Stomach (tissue), 19 donors: ENCODE measurements at regions of chr13 and their contacts with region 1.

Region 1: DNA sequence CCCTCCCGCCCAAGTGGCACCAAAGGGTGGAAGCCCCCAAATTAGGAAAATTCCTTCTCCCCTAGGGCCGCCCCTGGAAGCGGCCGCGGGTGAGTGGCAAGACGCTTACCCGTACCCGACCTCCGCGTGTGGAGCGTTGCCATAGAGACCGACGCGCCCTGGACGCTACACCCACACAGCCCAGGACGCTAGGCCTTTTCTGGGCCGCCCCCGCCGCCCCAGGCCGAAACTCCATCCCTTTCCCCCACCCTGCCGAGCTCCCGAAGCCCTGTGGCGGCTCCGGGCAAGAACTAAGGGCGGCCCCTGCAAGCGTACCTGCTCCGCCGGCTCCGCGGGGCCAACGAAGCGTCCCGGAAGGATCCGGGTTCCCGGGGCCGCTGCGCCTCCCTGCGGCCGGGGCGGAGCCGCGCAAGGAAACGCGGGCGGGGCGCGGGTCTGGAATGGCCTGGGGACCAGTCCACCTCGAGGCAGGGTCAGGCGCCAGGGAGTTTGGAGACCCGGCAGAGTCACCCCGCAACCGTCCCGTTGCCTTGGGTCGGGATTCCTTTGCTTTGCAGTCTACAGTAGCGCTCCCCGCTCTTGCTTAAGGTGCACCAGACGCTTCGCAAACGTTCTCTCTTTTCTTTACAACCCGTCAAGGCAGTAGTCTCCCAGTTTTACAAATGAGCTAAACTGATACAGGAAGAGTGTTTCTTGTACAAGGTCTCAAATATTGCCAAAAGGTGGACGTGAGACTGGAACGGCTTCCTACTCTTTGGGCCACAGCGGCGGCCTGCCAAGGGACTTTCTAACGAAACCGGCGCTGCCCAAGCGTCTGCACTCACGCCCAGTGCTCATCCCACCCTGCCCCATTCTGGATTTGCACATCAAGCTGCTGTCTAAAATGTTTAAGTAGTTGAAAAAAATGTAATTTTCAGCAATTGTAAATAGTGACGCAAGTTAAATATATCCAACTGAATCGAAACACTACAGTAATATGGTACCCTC is at the start of gene NEK5:
- DNase-seq: peak; percentile 72 to 89
- H3K4me3 ChIP-seq: peak within 1 kb of the TSS; percentile 62 to 78 (median 64)
- H3K27ac ChIP-seq: peak within 1 kb of the TSS in 3 of 5 donors; percentile 44 to 51 (median 48)
- H3K4me1 ChIP-seq: peaks cover 6 to 26% (median 21%) of the 10 kb centered on the region in 4 donors
- H3K27me3 ChIP-seq: no peaks in the 10 kb centered on the region
- CTCF ChIP-seq: peak in 5 of 7 experiments; percentile 65 to 76 (median 71)
- EP300 ChIP-seq: no peak
- POLR2A ChIP-seq: no peak
- total RNA-seq, gene NEK5: 0.73 to 4.0 TPM in 2 of 5 donors, not detected in the others

Region 2: DNA sequence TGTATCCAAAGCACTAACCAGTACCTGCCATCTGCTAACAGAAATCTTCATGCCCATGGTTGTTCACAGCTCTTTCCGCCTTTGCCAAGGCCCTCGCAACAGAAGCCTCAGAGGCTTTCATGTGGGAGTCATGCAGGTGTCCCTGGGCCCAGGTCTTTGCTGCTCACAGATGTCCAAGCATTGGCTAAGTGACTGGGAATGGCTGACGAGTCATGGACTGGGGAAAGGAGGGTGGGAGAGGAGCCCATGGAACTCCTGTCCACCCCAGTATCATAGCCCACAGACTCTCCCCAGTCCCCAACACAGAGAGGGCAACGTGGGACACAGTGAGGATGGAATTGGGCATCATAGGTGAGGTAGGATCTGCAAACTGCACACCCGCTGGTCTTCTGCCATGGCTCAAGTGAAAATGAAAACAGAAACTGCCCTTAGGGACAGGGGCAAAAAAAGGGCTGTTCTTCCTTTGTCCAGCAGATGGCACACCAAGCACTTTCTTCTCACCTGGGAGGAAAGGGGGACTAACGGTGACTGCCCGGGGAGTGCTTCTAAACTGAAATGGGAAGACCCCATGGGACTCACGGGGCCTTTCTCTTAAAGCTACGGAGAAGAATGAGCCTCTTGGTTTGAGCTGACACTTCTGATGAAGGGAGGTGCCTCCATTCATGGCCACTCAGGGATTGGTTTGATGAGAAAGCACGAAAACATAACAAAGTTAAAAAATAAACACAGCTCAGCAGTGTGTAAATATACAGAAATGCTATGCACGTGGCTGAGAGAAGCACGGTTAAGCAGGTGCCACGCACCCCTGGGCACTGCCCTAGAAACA is 314.0 kb before region 1 on chr13:
- intact Hi-C with region 1: loop called (anchors 10 kb)
- DNase-seq: peak; percentile 78 to 88
- H3K4me3 ChIP-seq: peak overlapping the region; percentile 14 to 29 (median 24)
- H3K27ac ChIP-seq: peak overlapping the region in 1 of 5 donors; percentile 23
- H3K4me1 ChIP-seq: peaks cover 7 to 27% (median 23%) of the 10 kb centered on the region in 4 donors
- H3K27me3 ChIP-seq: no peaks in the 10 kb centered on the region
- CTCF ChIP-seq: peak in 5 of 7 experiments; percentile 71 to 85 (median 80)
- EP300 ChIP-seq: no peak
- POLR2A ChIP-seq: no peak

Region 3: GRCh38 chr13:51895906-51896888 is 232.8 kb before region 1 on chr13:
- intact Hi-C with region 1: loop called (anchors 10 kb)
- DNase-seq: peak; percentile 67 to 80
- H3K4me3 ChIP-seq: no peak overlapping the region
- H3K27ac ChIP-seq: no peak overlapping the region
- H3K4me1 ChIP-seq: no peaks in the 10 kb centered on the region
- H3K27me3 ChIP-seq: no peaks in the 10 kb centered on the region
- CTCF ChIP-seq: peak in 5 of 7 experiments; percentile 45 to 63 (median 54)
- EP300 ChIP-seq: no peak
- POLR2A ChIP-seq: no peak

Region 4: GRCh38 chr13:51935326-51936201 is 193.4 kb before region 1 on chr13:
- intact Hi-C with region 1: loop called (anchors 10 kb)
- DNase-seq: peak; percentile 59 to 67
- H3K4me3 ChIP-seq: no peak overlapping the region
- H3K27ac ChIP-seq: no peak overlapping the region
- H3K4me1 ChIP-seq: peaks cover 0 to 8% (median 4%) of the 10 kb centered on the region in 4 donors
- H3K27me3 ChIP-seq: no peaks in the 10 kb centered on the region
- CTCF ChIP-seq: peak in 5 of 7 experiments; percentile 38 to 64 (median 53)
- EP300 ChIP-seq: no peak
- POLR2A ChIP-seq: no peak

Region 5: DNA sequence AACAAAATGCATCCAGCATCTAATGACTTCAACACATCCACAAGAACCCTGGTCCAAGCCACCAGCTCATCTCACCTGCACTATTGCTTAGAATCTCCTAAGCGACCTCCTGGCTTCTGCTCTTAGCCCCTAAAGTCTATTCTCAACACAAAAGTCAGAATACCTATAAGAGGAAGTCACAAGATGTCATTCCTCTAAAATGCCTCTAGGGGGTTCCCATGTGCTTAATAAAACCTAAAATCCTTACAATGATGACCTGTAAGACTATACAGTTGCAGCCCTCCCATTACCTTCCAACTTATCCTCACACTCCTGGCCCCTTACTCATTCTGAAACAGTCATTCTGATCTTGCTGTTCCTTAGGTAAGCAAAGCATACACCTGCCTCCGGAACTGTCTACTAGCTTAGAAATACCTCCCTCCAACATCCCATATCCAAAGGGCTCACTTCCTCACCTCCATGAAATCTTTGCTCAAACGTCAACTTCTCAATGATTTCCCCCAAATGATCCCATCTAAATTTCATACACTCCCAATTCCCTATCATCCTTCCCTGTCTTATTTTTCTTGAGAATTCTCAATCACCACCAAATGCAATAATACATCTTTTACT is 127.8 kb before region 1 on chr13:
- intact Hi-C with region 1: loop called (anchors 10 kb)
- DNase-seq: peak in 1 of 2 donors; percentile 56
- H3K4me3 ChIP-seq: no peak overlapping the region
- H3K27ac ChIP-seq: no peak overlapping the region
- H3K4me1 ChIP-seq: peaks cover 27 to 56% (median 38%) of the 10 kb centered on the region in 4 donors
- H3K27me3 ChIP-seq: no peaks in the 10 kb centered on the region
- CTCF ChIP-seq: peak in 5 of 7 experiments; percentile 35 to 74 (median 53)
- EP300 ChIP-seq: no peak
- POLR2A ChIP-seq: no peak